Activated CD4-positive, alpha-beta T cell treated with anti-CD3 and anti-CD28 coated beads, Interleukin-2, amount 10 ng/mL, durations not matched to agents 24 days and 14 days (primary cell): ENCODE measurements at regions of chr1 and their contacts with region 1.

Region 1: GRCh38 chr1:180631766-180632325 is at the start of gene XPR1:
- DNase-seq: peak; percentile 98
- H3K4me3 Mint-ChIP-seq: no peak within 1 kb of the TSS
- H3K27ac Mint-ChIP-seq: peak within 1 kb of the TSS; percentile 93
- H3K4me1 Mint-ChIP-seq: peaks cover 6% of the 10 kb centered on the region
- H3K27me3 Mint-ChIP-seq: peaks cover 8% of the 10 kb centered on the region
- total RNA-seq, gene XPR1: 24.2 and 24.7 TPM in 2 replicates

Region 2: GRCh38 chr1:179882243-179883039 is 749.4 kb before region 1 on chr1 and contains the start of gene TOR1AIP1:
- intact Hi-C with region 1: loop called (anchors 5 kb)
- DNase-seq: peak; percentile 99
- H3K4me3 Mint-ChIP-seq: peak within 1 kb of the TSS; percentile 94
- H3K27ac Mint-ChIP-seq: peak within 1 kb of the TSS; percentile 99
- H3K4me1 Mint-ChIP-seq: peaks cover 45% of the 10 kb centered on the region
- H3K27me3 Mint-ChIP-seq: no peaks in the 10 kb centered on the region
- total RNA-seq, gene TOR1AIP1: 69.2 and 77.2 TPM in 2 replicates

Region 3: DNA sequence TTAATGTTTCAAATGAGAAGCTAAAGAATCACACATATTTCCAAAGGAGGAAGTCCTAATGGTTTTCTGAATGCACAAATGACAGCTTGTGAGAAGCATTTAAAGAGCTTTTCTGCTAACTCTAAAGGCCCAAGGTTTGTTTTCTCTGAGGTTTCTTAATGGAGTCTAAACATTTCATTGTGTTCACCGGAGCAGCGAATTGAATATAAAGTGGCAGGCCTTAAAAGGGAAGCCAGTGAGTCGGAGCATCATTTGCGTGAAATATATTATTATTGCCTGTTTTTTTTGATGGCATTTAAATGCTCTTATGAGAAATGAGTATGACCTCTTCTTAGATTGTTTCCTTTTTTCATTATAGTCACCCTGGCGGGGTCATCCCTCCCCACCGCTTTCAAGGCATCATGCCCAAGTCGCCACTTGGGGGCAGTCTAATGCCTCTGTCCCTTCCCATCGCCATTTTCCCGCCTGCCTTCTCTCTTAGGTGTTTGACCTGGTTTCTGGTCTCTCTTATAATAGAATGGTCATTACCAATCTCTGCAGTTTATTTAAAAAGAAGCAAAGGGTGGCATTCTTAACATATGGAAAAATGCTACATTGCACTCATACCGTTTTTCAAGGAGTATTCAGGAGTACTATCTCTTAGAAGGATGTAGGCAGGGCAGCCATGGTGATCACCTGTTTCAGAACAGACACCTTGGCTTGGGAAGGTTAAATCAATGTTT is 98.4 kb before region 1 on chr1:
- intact Hi-C with region 1: loop called (anchors 5 kb)
- DNase-seq: peak; percentile 90
- H3K4me3 Mint-ChIP-seq: no peak overlapping the region
- H3K27ac Mint-ChIP-seq: no peak overlapping the region
- H3K4me1 Mint-ChIP-seq: peaks cover 5% of the 10 kb centered on the region
- H3K27me3 Mint-ChIP-seq: peaks cover 27% of the 10 kb centered on the region

Region 4: GRCh38 chr1:180585994-180586359 is 45.9 kb before region 1 on chr1:
- intact Hi-C with region 1: loop called (anchors 2 kb)
- DNase-seq: no peak
- H3K4me3 Mint-ChIP-seq: peak overlapping the region; percentile 75
- H3K27ac Mint-ChIP-seq: peak overlapping the region; percentile 95
- H3K4me1 Mint-ChIP-seq: peaks cover 25% of the 10 kb centered on the region
- H3K27me3 Mint-ChIP-seq: no peaks in the 10 kb centered on the region

Region 5: DNA sequence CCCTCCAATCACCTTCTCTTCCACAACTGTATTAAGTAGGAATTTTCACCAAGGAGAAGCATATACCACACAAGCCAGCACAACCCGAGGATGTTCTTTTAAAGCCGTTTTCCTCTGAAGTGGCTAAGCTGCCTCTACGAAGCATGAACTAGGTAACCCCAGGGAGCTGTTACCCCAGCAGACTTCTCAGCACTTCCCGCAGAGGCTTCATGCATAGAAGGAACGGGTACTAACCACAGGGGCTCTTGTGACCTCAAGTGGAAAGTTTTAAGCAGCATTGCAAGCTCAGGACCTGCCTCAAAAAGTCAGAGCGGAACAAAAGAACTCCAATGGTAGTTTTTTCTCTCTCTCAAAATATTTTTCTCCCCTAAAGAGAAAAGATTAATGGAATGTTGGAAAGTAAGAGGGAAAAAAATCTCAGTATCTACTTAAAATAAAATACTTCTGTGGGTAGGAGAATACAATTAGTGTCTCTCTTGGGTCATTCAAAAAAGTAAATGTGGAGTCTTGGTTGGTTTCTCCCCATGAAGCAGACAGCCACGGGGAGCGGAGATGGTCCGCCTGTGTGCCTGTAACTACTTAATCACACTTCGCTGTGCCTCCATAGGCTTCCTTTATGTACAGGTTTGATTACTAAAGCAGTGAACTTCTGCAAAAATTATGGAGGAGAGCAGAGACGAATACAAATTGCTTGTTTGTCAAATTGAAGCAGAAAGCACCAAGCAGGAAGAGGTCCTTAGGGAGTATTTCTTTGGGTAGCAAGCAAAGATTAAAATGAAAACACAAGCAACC is 349.9 kb after region 1 on chr1:
- intact Hi-C with region 1: loop called (anchors 1 kb)
- DNase-seq: peak; percentile 90
- H3K4me3 Mint-ChIP-seq: peak overlapping the region; percentile 58
- H3K27ac Mint-ChIP-seq: peak overlapping the region; percentile 86
- H3K4me1 Mint-ChIP-seq: peaks cover 36% of the 10 kb centered on the region
- H3K27me3 Mint-ChIP-seq: no peaks in the 10 kb centered on the region

Region 6: GRCh38 chr1:181105134-181106021 is 473.5 kb after region 1 on chr1:
- intact Hi-C with region 1: loop called (anchors 2 kb)
- DNase-seq: peak; percentile 97
- H3K4me3 Mint-ChIP-seq: peak overlapping the region; percentile 86
- H3K27ac Mint-ChIP-seq: peak overlapping the region; percentile 90
- H3K4me1 Mint-ChIP-seq: peaks cover 73% of the 10 kb centered on the region
- H3K27me3 Mint-ChIP-seq: peaks cover 40% of the 10 kb centered on the region

Region 7: GRCh38 chr1:182029379-182030331 is 1397.8 kb after region 1 on chr1:
- intact Hi-C with region 1: loop called (anchors 5 kb)
- DNase-seq: peak; percentile 99
- H3K4me3 Mint-ChIP-seq: peak overlapping the region; percentile 99
- H3K27ac Mint-ChIP-seq: peak overlapping the region; percentile 99
- H3K4me1 Mint-ChIP-seq: peaks cover 14% of the 10 kb centered on the region
- H3K27me3 Mint-ChIP-seq: no peaks in the 10 kb centered on the region